Heart right ventricle (tissue), 16 donors: ENCODE measurements at regions of chr4 and their contacts with region 1.

Region 1: GRCh38 chr4:73729534-73730165 is 10.7 kb upstream of the CXCL8 start:
- DNase-seq: peak; percentile 30 to 60
- ATAC-seq: peak; percentile 76 to 91 (median 87)
- H3K4me3 ChIP-seq: no peak overlapping the region
- H3K27ac ChIP-seq: peak overlapping the region in 1 of 10 donors; percentile 83
- H3K4me1 ChIP-seq: peaks cover 0 to 80% (median 32%) of the 10 kb centered on the region in 9 donors
- H3K27me3 ChIP-seq: no peaks in the 10 kb centered on the region
- CTCF ChIP-seq: peak; percentile 62 to 90 (median 83)

Region 2: GRCh38 chr4:73669410-73670183 is 60.1 kb before region 1 on chr4:
- intact Hi-C with region 1: loop called in 1 of 10 experiments (anchors 2 kb)
- DNase-seq: no peak
- ATAC-seq: peak in 1 of 8 donors; percentile 36
- H3K4me3 ChIP-seq: no peak overlapping the region
- H3K27ac ChIP-seq: peak overlapping the region in 2 of 10 donors; percentile 3 to 40
- H3K4me1 ChIP-seq: peaks cover 0 to 8% (median 0%) of the 10 kb centered on the region in 9 donors
- H3K27me3 ChIP-seq: no peaks in the 10 kb centered on the region
- CTCF ChIP-seq: no peak

Region 3: GRCh38 chr4:73869130-73870050 is 139.7 kb after region 1 on chr4 and contains the start of gene CXCL1:
- intact Hi-C with region 1: loop called in 3 of 10 experiments (anchors 10 kb)
- DNase-seq: peak; percentile 16 to 56
- ATAC-seq: peak; percentile 62 to 83 (median 73)
- H3K4me3 ChIP-seq: peak within 1 kb of the TSS; percentile 36 to 75 (median 62)
- H3K27ac ChIP-seq: peak within 1 kb of the TSS in 8 of 10 donors; percentile 28 to 91 (median 64)
- H3K4me1 ChIP-seq: peaks cover 0 to 31% (median 12%) of the 10 kb centered on the region in 9 donors
- H3K27me3 ChIP-seq: peaks cover 0 to 19% (median 5%) of the 10 kb centered on the region in 7 donors
- CTCF ChIP-seq: no peak
- total RNA-seq, gene CXCL1: 0.30 to 15.0 (median 1.3) TPM

Region 4: DNA sequence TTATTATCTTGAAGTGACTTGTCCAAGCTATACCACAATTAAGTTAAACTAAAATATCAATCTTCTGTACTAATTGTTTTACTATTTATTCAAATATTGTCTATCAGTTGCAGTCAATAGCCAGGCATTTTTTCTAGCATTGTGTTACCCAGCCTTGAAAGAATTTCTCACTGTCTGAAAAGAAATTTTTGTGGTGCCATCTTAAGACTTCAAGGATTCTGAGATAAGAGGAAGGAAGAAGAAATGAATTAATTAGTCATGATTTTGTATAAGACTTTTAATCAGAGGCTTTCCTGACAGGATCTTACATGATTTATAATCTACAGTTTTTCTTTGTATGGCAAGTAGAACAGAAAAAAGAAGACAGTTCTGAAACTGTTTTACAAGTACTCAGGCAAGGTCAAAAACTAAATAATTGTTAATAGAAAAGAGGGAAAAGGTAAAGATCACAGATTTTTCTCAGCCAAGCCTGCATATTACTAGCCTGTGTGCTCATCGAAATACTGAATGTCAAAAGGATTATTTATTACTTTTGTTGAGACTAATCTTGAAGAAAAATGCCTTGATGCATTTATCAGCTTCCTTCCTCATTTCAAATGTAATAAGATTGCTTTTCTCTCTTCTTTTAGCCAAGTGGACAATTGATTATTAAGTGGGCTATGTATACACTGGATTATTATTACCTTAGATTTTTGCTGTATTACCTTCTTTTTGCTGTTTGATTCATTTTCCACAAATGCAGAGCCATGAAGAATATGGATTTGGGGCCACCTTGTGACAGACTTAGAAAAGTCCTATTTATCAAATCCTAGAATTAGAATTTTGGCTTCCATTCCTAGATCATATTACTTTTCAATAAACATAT is 193.3 kb after region 1 on chr4:
- intact Hi-C with region 1: loop called in 3 of 10 experiments (anchors 5 to 10 kb)
- DNase-seq: no peak
- ATAC-seq: no peak
- H3K4me3 ChIP-seq: no peak overlapping the region
- H3K27ac ChIP-seq: no peak overlapping the region
- H3K4me1 ChIP-seq: peaks cover 0 to 7% (median 0%) of the 10 kb centered on the region in 9 donors
- H3K27me3 ChIP-seq: peaks cover 0 to 8% (median 0%) of the 10 kb centered on the region in 7 donors
- CTCF ChIP-seq: peak in 8 of 9 donors; percentile 26 to 60 (median 47)